WTC11 (cell line): ENCODE measurements at regions of chr19 and their contacts with region 1.

Region 1: DNA sequence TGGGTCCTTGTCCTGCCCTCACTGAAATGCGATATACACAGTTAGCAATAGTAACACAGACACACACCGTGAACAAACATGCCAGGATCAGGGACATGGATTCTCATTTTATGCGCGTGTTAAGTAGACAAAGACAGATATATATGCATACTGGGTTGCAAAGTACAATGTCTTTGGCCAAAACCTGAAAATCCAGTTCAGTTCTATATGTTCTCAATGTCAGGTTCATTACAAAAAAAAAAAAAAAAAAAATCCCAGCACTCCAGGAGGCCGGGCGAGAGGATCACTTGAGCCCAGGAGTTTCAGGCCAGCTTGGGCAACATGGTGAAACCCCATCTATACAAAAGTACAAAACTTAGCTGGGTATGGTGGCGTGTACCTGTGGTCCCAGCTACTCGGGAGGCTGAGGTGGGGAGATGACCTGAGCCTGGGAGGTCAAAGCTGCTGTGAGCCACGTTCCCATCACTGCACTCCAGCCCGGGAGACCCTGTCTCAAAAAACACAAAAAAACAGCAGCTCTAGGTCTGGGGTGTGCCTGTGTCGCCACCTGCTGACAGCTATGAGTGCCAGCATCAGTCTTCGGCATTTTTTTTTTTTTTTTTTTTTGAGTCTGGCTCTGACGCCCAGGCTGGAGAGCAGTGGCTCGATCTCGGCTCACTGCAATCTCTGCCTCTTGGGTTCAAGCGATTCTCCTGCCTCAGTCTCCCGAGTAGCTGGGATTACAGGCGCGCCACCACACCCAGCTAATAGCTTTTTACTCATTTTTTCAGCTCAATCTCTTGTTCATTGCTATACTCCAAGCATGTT is 10.3 kb downstream of the AP2S1 start:
- DNase-seq: peak; percentile 66
- ATAC-seq: peak; percentile 86
- H3K4me3 Mint-ChIP-seq: no peak overlapping the region
- H3K27ac Mint-ChIP-seq: peak overlapping the region; percentile 68
- H3K4me1 Mint-ChIP-seq: no peaks in the 10 kb centered on the region
- H3K27me3 Mint-ChIP-seq: no peaks in the 10 kb centered on the region
- CTCF ChIP-seq: peak; percentile 39; the same call in 1 of the 2 replicates

Region 2: DNA sequence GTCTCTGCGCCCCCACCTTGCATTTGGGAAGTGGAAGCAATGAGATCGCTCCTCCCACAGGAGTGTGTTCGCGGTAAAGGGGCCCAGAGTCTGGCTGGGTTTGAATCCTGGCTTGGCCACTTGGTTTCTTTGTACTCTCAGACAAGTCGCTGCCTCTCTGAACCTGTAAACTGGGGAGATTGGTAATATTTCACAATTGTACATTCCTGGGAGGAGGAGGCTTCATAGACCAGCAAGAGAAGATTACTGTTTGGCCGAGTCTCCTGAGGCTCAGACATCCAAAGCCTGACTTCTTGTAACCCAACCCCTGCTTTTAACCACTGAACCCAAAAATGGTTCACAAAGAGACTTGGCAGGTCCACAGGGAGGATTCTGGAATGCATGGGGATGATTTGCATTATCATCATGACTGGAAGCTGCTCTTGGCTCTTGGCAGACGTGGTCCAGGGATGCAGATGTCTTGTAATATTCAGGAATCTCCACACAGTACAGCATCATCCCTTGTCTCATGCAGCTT is 80.5 kb before region 1 on chr19:
- CTCF ChIA-PET with region 1: interaction called, 33 read pairs
- POLR2A ChIA-PET with region 1: interaction called, 8 read pairs
- DNase-seq: no peak
- ATAC-seq: peak; percentile 23
- H3K4me3 Mint-ChIP-seq: no peak overlapping the region
- H3K27ac Mint-ChIP-seq: peak overlapping the region; percentile 39; the same call in 1 of the 2 replicates
- H3K4me1 Mint-ChIP-seq: peaks cover 9% of the 10 kb centered on the region
- H3K27me3 Mint-ChIP-seq: no peaks in the 10 kb centered on the region; the same call in 1 of the 2 replicates
- CTCF ChIP-seq: no peak

Region 3: DNA sequence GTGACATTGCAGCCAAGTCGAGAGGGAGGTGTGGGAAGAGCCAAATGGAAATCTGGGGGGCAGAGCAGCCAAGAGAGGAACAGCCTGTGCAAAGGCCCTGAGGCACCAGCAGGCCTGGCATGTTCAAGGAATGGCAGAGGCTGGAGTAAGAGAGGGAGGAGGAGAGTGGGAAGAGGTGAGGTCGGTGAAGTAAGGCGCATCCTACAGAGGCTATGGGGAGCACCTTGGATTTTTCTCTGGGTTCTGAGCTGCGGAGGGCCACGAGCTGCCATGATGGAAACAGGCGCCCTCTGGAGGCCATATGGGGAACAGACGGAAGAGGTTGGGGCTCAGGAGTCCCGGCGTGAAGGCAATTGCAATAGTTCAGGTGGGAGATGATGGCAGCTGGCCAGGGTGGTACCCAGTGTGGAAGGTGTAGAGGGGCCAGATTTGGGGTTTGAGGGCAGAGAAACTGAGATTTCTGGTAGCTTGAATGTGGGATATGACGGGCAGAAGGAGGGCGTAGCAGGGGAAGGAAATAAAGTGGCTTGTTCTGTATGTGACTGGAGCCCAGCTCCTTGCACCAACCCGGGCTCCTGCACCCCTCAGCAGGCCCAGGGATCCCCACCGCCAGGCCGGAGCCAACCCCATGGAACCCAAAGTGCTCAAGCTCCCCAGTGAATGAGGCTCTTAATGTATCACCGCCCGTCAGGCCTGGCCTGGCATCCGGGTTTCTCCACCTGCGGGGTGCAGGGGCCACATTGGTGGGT is 73.6 kb before region 1 on chr19:
- CTCF ChIA-PET with region 1: interaction called, 42 read pairs
- POLR2A ChIA-PET with region 1: interaction called, 8 read pairs
- DNase-seq: peak; percentile 78
- ATAC-seq: peak; percentile 93
- H3K4me3 Mint-ChIP-seq: no peak overlapping the region
- H3K27ac Mint-ChIP-seq: peak overlapping the region; percentile 83; the same call in 1 of the 2 replicates
- H3K4me1 Mint-ChIP-seq: no peaks in the 10 kb centered on the region; the same call in 1 of the 2 replicates
- H3K27me3 Mint-ChIP-seq: no peaks in the 10 kb centered on the region
- CTCF ChIP-seq: peak; percentile 71

Region 4: GRCh38 chr19:46788262-46788967 is 51.9 kb before region 1 on chr19 and contains the start of gene SLC1A5:
- CTCF ChIA-PET with region 1: interaction called, 22 read pairs
- POLR2A ChIA-PET with region 1: interaction called, 11 read pairs
- DNase-seq: peak; percentile 99
- ATAC-seq: peak; percentile 86
- H3K4me3 Mint-ChIP-seq: peak within 1 kb of the TSS; percentile 95
- H3K27ac Mint-ChIP-seq: no peak within 1 kb of the TSS
- H3K4me1 Mint-ChIP-seq: peaks cover 36% of the 10 kb centered on the region
- H3K27me3 Mint-ChIP-seq: peaks cover 16% of the 10 kb centered on the region
- CTCF ChIP-seq: no peak
- total RNA-seq, gene SLC1A5: 173 to 239 TPM (median 187 TPM) in 3 replicates

Region 5: GRCh38 chr19:46797881-46798280 is 42.5 kb before region 1 on chr19:
- CTCF ChIA-PET with region 1: interaction called, 12 read pairs
- POLR2A ChIA-PET with region 1: interaction called, 3 read pairs
- DNase-seq: no peak
- ATAC-seq: no peak
- H3K4me3 Mint-ChIP-seq: no peak overlapping the region
- H3K27ac Mint-ChIP-seq: no peak overlapping the region
- H3K4me1 Mint-ChIP-seq: no peaks in the 10 kb centered on the region
- H3K27me3 Mint-ChIP-seq: no peaks in the 10 kb centered on the region
- CTCF ChIP-seq: no peak

Region 6: DNA sequence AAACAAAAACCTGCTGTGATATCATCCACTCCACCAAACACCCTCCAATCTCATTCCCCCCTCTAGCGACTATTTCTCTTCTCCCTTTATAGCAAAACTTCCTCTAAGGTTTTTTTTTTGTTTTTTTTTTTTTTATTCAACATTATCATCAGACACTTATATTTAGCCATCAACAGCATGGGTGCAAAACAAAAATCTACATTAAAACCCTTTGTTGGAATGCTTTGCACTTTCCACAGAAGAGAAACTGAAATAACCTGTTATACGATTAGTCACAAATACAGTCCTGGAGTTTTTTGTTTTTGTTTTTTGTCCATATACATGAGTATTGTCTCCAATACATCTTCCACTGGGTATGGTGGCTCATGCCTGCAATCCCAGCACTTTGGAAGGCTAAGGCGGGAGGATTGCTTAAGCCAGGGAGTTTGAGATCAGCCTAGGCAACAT is 14.8 kb before region 1 on chr19:
- CTCF ChIA-PET with region 1: interaction called, 20 read pairs
- POLR2A ChIA-PET with region 1: no interaction called
- DNase-seq: no peak
- ATAC-seq: no peak
- H3K4me3 Mint-ChIP-seq: no peak overlapping the region
- H3K27ac Mint-ChIP-seq: no peak overlapping the region
- H3K4me1 Mint-ChIP-seq: peaks cover 14% of the 10 kb centered on the region
- H3K27me3 Mint-ChIP-seq: no peaks in the 10 kb centered on the region
- CTCF ChIP-seq: no peak

Region 7: DNA sequence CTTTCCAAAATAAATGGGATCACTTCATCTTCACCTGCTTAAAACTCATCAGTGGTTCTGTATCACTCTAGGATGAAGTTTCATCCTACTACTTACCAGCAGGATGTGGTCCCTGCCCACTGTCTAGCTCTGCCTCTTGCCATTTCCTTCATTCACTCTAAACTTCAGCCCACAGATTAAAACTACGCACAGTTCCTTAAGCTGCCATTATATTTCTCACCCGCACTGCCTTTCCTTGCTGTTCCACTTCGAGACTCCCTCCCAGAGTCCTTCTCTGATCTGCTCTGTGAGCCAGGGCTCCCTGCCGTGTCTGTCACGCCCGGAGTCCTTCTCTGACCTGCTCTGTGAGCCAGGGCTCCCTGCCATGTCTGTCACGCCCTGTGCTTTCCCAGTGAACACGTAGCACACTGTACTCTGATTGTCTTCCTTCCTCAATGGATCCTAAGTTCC is 127.3 kb after region 1 on chr19:
- CTCF ChIA-PET with region 1: no interaction called
- POLR2A ChIA-PET with region 1: no interaction called
- DNase-seq: no peak
- ATAC-seq: no peak
- H3K4me3 Mint-ChIP-seq: no peak overlapping the region
- H3K27ac Mint-ChIP-seq: peak overlapping the region; percentile 42
- H3K4me1 Mint-ChIP-seq: no peaks in the 10 kb centered on the region
- H3K27me3 Mint-ChIP-seq: no peaks in the 10 kb centered on the region
- CTCF ChIP-seq: no peak

Region 8: DNA sequence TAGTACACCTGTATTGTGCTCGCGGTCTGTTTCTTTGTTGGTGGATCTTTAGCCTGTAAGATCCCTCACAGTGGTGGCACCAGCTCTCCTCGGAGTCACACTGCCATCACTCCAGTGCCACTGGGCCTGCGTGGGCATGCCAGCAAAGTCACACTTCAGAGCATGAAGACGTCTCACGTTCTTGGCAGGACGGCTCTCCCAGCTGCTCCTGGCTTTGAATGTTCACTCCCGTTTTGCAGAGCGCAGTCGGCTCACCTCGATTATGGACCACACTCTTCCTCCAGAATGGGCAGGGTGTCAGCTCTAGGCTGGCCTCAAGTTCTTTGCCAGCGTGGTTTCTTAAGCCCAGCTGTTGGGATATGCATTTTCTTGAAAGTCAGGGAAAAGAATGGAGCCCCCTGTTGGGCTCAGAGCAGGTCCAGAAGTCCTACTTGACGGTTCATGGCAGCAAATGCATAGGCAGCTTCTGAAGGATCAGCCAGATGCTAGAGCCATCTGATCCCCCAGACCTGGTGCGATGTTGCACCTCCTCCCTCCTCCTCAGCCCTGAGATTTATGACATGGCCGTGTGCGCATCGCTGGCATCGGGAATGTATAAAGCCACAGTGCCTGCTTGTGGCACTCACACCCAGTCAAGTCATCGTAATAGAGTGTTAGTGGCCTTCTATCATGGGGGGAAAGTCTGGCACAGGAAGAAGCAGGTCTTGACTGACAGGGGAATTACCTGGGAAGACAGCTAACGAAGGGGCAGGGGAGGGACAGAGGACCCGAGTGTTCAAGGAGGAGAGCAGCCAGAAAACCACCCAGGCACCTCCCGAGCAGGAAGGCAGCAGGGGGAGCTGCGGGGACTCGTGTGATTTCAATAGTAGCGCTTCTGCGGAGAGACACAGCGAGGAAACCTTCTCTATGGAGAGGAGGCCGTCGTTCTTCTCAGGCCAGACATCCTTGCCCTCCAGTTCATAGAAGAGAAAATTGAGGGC is 139.1 kb after region 1 on chr19:
- CTCF ChIA-PET with region 1: no interaction called
- POLR2A ChIA-PET with region 1: no interaction called
- DNase-seq: peak; percentile 42
- ATAC-seq: peak; percentile 25; the same call in 1 of the 2 replicates
- H3K4me3 Mint-ChIP-seq: no peak overlapping the region
- H3K27ac Mint-ChIP-seq: peak overlapping the region; percentile 44
- H3K4me1 Mint-ChIP-seq: peaks cover 45% of the 10 kb centered on the region
- H3K27me3 Mint-ChIP-seq: no peaks in the 10 kb centered on the region
- CTCF ChIP-seq: no peak